ENCODE measurements at regions of chr9 and their contacts with region 1.

Region 1: DNA sequence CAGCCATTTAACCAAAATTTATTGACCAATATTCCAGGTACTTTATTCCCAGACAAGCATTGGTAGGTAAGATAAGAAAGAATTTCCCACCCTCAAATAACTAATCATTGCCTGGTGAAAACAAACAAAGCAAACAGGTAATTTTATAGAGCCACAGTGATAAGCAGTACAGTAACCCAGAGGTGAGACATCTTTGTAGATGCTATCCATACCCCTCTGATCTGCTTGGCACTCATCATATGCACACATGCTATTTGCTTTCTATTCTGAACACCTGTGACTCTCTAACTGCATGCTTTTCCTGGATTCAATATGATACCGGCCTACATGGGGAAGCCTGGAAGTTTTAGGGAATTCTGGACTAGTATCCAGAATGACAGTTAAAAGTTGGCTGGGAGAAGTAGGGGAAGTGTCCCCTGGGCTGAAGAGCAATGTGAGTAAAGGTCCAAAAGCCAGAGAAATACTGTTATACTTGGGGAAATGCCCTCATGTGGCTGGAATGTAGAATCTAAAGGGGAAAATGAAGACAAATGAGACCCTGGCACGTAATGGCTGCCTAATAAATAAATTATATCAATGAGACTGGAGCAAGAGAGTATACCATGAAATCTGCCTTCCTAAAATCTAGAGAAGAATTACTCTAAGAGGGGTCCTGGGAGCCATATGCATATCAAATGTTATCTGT is 243.8 kb upstream of the ADAMTSL1 start:
- DNase-seq: no peak
- CTCF ChIP-seq: no peak

Region 2: GRCh38 chr9:18208154-18209059 is 21.7 kb before region 1 on chr9:
- CTCF ChIA-PET with region 1: interaction called, 11 read pairs
- POLR2A ChIA-PET with region 1: no interaction called
- DNase-seq: no peak
- CTCF ChIP-seq: no peak

Measured in GM10248 (cell line).